Posterior vena cava (tissue), 2 donors: ENCODE measurements at regions of chr14 and their contacts with region 1.

Region 1: DNA sequence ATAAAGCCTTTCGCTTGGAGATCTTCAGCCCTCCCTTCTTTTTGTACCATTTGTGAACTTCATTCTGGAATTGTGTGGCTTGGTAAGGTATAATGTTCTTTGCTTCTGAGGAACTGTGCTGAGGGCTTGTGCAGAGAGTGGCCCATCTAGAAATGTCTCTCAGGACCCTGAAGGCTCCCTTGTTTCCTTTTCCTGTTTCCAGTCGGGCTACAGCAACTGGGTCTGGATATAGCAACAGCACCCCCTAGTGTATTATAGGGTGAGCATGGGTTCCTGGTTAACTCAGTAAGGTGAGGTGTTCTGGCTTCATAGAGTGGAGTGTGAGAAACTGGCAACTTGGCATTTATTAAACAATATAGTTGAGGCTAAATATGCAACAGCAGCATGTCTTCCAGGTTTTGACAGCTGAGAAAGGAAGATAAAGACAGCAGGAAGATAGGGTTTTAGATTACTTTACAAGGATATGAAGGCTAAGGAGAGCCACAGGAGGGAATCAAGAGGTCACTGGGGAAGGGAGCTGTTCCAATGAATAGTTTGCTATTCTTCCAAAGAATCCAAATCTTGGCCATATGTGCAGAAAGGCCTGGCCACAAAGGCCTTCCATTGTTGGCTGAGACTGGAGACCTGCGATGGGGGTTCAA is 49.1 kb upstream of the RNU6-8 start:
- DNase-seq: no peak

Region 2: DNA sequence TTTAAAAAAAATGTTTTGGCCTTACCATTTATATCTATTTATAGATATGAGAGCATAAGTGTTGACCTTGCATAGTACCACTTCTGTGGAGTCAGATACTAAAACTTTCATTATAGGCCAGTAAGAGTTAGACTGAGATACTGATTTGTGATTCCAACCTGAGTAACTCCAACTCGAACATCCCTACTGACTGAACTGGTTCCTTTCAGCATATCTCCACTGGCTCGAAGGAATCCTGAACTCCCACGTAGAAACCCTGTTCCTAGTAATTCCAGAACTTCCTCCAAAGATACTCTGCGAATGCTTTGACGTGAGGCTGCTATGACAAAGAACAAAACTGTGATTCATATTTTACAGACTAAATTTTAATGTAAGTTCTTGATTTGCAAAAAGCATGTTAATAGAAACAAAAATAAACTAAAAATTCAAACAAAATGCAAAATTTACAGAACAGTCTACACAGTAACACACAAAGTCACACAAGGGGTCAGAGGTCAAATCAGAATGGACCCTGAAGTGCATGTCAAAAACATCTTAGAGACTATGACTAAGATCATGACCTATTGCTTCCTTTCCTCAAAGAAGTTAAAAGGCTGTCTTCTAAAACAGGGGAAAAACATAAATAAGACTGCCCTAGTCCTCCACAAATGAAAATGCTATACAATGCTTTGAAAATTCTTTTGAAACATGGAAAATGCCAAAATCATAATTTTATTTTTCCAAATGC is 863.3 kb before region 1 on chr14:
- intact Hi-C with region 1: loop called in 1 of 2 experiments (anchors 10 kb)
- DNase-seq: no peak

Region 3: GRCh38 chr14:31505411-31505810 is 746.7 kb before region 1 on chr14:
- intact Hi-C with region 1: loop called (anchors 5 to 10 kb)
- DNase-seq: no peak

Region 4: GRCh38 chr14:31937721-31938346 is 314.3 kb before region 1 on chr14:
- intact Hi-C with region 1: loop called (anchors 10 kb)
- DNase-seq: no peak

Region 5: GRCh38 chr14:32076278-32077080 is 175.7 kb before region 1 on chr14:
- intact Hi-C with region 1: loop called in 1 of 2 experiments (anchors 5 kb)
- DNase-seq: peak; percentile 99

Region 6: DNA sequence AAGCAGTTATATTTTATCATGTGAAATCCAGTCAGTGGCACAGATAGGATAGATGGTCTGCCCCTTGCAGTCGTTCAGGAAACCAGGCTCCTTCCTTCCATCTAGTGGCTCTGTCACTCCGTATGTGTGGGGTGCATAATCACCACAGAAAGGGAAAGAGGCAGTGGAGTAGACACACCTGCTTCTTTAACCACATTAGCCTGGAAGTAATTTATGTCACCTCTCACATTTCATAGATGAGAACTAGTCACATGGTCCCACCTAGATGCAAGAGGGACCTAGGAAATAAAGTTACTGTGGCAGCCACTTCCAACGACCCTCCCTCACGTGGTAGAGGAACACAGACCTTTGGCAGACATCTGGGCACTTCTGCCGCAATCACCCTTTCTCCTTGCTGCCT is 34.8 kb before region 1 on chr14:
- intact Hi-C with region 1: loop called in 1 of 2 experiments (anchors 1 kb)
- DNase-seq: no peak